Activated CD4-positive, alpha-beta T cell treated with anti-CD3 and anti-CD28 coated beads, Interleukin-2, amount 10 ng/mL, durations not matched to agents 24 days and 14 days (primary cell): ENCODE measurements at regions of chr19 and their contacts with region 1.

Region 1: DNA sequence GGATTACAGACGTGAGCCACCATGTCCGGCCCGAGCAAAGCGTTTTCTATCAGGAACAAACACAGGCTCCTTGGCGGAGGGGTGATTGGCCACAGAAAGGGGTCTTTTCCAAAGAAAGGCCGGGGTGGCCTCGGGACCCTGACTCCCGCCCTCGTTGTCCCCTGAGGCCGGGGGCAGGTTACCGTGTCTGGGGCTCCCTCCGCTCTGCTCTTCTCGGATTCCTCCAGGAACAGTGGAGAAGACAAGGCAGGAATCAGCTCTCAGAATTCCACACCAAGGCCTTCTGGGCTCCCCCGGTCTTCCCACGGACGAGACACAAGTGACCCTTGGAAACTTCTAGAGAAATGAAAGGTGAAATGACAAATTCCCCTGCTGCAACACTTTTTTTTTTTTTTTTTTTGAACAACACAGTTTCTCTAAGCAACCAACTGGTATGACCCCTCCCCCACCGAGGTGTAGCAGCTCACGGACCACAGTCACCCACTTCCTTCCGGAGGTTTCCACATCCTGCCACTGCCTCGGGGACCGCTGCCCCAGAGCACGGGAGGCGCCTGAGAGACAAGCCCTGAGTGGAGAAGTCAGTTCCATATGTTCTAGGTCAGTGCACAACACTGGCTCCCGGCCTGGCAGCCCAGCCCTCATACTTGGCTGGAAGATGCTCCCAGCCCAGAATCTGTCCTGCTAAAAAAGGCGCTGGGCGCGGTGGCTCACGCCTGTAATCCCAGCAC is 11.0 kb downstream of the MOB3A start:
- DNase-seq: peak; percentile 99
- H3K4me3 Mint-ChIP-seq: peak overlapping the region; percentile 98
- H3K27ac Mint-ChIP-seq: peak overlapping the region; percentile 100
- H3K4me1 Mint-ChIP-seq: peaks cover 65% of the 10 kb centered on the region
- H3K27me3 Mint-ChIP-seq: peaks cover 2% of the 10 kb centered on the region

Region 2: GRCh38 chr19:1875646-1876495 is 209.3 kb before region 1 on chr19:
- intact Hi-C with region 1: loop called (anchors 5 kb)
- DNase-seq: peak; percentile 97
- H3K4me3 Mint-ChIP-seq: peak overlapping the region; percentile 99
- H3K27ac Mint-ChIP-seq: peak overlapping the region; percentile 95
- H3K4me1 Mint-ChIP-seq: peaks cover 16% of the 10 kb centered on the region
- H3K27me3 Mint-ChIP-seq: no peaks in the 10 kb centered on the region

Region 3: GRCh38 chr19:2016041-2016807 is 68.9 kb before region 1 on chr19:
- intact Hi-C with region 1: loop called (anchors 2 kb)
- DNase-seq: peak; percentile 88
- H3K4me3 Mint-ChIP-seq: peak overlapping the region; percentile 82
- H3K27ac Mint-ChIP-seq: peak overlapping the region; percentile 35
- H3K4me1 Mint-ChIP-seq: peaks cover 8% of the 10 kb centered on the region
- H3K27me3 Mint-ChIP-seq: no peaks in the 10 kb centered on the region

Region 4: DNA sequence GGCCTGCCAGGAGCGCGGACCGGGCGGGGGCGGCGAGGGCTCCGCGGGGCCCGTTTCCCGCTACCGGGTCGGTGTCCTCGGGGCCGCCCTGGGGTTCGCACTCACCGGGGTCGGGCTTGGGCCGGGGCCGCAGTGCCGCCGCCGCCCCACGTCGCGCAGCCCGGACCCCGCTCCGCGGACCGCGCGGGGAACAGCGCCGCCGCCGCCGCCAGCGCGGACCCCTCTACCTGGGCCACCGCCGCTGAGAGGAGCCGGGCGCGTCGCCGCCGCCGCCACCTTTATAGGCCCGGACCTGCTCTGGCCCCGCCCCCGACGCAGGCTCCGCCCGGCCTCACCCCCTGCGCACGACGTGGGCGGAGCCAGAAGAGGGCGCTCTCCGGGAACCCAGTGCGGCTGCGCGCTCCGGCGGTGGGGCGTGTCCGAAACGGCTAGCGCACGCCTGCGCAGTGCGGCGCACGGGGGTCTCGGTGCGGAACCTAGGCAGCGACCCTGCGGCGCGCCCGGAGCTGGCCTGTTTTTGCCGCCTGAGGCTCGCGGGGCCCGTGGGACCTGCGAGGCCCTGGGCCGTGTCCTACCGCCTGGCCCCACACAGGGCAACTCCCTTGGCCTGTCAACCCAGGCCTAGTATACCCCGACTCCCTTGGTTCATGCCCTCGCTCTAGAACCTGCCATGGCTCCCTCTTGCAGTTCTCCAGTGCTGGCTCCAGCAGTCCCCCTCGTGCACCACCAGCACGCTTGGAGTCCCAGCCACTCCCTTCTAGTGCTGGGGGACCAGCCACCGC is 34.0 kb before region 1 on chr19 and contains the start of gene MKNK2:
- intact Hi-C with region 1: loop called (anchors 2 kb)
- DNase-seq: peak; percentile 99
- H3K4me3 Mint-ChIP-seq: peak within 1 kb of the TSS; percentile 90
- H3K27ac Mint-ChIP-seq: peak within 1 kb of the TSS; percentile 94
- H3K4me1 Mint-ChIP-seq: peaks cover 35% of the 10 kb centered on the region
- H3K27me3 Mint-ChIP-seq: no peaks in the 10 kb centered on the region
- total RNA-seq, gene MKNK2: 159 and 169 TPM in 2 replicates

Region 5: GRCh38 chr19:2061495-2062381 is 23.4 kb before region 1 on chr19:
- intact Hi-C with region 1: loop called (anchors 1 kb)
- DNase-seq: peak; percentile 100
- H3K4me3 Mint-ChIP-seq: peak overlapping the region; percentile 90
- H3K27ac Mint-ChIP-seq: peak overlapping the region; percentile 91
- H3K4me1 Mint-ChIP-seq: peaks cover 20% of the 10 kb centered on the region
- H3K27me3 Mint-ChIP-seq: no peaks in the 10 kb centered on the region

Region 6: DNA sequence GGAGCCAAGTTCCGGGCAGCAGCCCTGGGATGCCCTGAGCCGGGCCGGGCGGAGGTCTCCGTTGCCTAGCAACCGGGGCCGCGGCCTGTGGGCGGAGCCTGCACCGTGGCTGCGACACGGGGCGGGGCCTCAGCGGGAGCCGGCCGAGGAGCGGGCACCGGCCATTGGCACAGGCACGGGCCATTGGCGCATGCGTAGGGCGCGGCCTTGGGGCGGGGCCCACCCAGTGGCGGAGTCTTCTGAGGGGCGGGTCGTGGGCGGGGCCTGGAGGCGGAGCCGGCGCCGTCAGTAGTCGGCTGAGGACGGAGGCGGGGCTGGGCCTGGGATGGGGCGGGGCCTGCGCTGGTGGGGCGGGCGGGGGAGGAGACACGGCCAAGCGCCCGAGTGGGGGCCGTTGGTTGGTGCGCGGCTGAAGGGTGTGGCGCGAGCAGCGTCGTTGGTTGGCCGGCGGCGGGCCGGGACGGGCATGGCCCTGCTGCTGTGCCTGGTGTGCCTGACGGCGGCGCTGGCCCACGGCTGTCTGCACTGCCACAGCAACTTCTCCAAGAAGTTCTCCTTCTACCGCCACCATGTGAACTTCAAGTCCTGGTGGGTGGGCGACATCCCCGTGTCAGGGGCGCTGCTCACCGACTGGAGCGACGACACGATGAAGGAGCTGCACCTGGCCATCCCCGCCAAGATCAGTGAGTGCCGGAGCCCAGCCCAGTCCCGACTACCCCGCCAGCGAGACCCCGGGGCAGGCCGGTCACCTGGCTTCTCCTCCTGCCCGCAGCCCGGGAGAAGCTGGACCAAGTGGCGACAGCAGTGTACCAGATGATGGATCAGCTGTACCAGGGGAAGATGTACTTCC is 11.5 kb after region 1 on chr19 and contains the start of gene IZUMO4:
- intact Hi-C with region 1: loop called (anchors 1 kb)
- DNase-seq: peak; percentile 100
- H3K4me3 Mint-ChIP-seq: peak within 1 kb of the TSS; percentile 90
- H3K27ac Mint-ChIP-seq: peak within 1 kb of the TSS; percentile 94
- H3K4me1 Mint-ChIP-seq: peaks cover 25% of the 10 kb centered on the region
- H3K27me3 Mint-ChIP-seq: no peaks in the 10 kb centered on the region
- total RNA-seq, gene IZUMO4: 9.5 and 10.0 TPM in 2 replicates